Psoas muscle (tissue), 8 donors: ENCODE measurements at regions of chr7 and their contacts with region 1.

Region 1: DNA sequence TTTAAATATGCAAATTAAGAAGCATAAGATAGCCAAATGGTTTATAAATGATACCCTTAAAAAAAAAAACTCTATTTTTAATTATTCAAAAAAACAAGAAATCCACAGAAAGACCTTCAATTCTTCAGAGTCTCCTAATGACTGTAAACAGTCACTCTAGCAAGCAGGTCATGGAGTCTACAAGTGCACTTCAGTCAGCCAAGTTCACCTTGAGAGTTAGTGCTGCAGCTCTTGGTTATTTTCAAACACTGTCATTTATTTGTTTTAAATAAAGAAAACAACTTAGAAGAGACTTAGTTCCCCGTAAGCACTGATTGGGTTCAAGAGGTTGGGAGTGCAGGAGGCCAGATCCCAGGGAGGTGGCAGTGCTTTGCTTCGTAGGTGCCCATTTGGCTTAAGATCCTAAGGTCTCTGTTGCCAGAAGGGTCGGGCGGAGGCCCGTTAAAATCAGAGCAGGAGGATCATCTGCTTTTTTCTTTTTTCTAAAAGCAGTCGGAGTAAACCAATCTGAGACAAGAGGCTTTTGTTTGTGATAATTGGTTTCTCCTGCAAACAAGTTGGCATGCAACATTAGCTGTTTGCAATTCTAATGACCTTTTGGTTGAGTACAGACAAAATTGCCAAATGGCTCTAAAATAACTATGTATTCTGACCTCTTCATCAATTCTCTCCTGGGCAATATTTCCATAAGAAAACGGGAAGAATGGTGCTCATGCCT is 86.4 kb upstream of the ELMO1 start:
- DNase-seq: no peak
- ATAC-seq: no peak
- H3K4me3 ChIP-seq: no peak overlapping the region
- H3K27ac ChIP-seq: no peak overlapping the region
- H3K4me1 ChIP-seq: no peaks in the 10 kb centered on the region
- H3K27me3 ChIP-seq: no peaks in the 10 kb centered on the region
- CTCF ChIP-seq: no peak

Region 2: DNA sequence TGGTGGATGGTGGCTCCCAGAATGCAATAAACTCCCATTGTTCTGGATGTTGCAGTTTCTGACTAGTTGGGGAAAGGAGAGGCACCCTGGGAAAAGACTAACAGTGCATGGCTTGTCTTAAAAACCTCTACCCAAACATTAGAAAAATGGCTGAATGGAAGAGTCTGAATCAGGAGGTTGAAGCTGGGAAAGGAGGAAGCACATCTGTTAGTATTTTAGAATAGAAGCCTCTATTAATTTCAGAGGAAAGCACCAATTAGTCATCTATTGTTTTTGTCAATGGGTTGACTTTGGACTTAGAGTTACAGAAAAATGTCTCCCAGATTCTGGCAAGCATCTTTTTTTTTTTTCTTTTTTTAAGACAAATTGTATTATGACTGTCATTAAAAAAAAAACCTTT is 30.3 kb before region 1 on chr7:
- intact Hi-C with region 1: loop called in 1 of 2 experiments (anchors 1 kb)
- DNase-seq: no peak
- ATAC-seq: no peak
- H3K4me3 ChIP-seq: no peak overlapping the region
- H3K27ac ChIP-seq: no peak overlapping the region
- H3K4me1 ChIP-seq: no peaks in the 10 kb centered on the region
- H3K27me3 ChIP-seq: no peaks in the 10 kb centered on the region
- CTCF ChIP-seq: no peak